Activated CD4-positive, alpha-beta memory T cell treated with anti-CD3 and anti-CD28 coated beads, Interleukin-2, amount 10 ng/mL, durations not matched to agents 7 days and 5 days (primary cell): ENCODE measurements at regions of chr2 and their contacts with region 1.

Region 1: GRCh38 chr2:189762551-189763298 is at the start of gene OSGEPL1:
- DNase-seq: peak; percentile 93
- H3K4me3 Mint-ChIP-seq: peak within 1 kb of the TSS; percentile 90
- H3K27ac Mint-ChIP-seq: peak within 1 kb of the TSS; percentile 97
- H3K4me1 Mint-ChIP-seq: peaks cover 17% of the 10 kb centered on the region
- H3K27me3 Mint-ChIP-seq: no peaks in the 10 kb centered on the region
- total RNA-seq, gene OSGEPL1: 8.0 TPM

Region 2: GRCh38 chr2:189661148-189661956 is 101.4 kb before region 1 on chr2 and contains the start of gene ASNSD1:
- CTCF ChIA-PET with region 1: interaction called, 34 read pairs
- POLR2A ChIA-PET with region 1: interaction called, 18 read pairs
- DNase-seq: peak; percentile 99
- H3K4me3 Mint-ChIP-seq: no peak within 1 kb of the TSS
- H3K27ac Mint-ChIP-seq: no peak within 1 kb of the TSS
- H3K4me1 Mint-ChIP-seq: peaks cover 52% of the 10 kb centered on the region
- H3K27me3 Mint-ChIP-seq: no peaks in the 10 kb centered on the region
- total RNA-seq, gene ASNSD1: 37.9 to 38.4 TPM

Region 3: GRCh38 chr2:189674374-189675112 is 88.2 kb before region 1 on chr2 and contains the start of gene ANKAR:
- CTCF ChIA-PET with region 1: interaction called, 11 read pairs
- POLR2A ChIA-PET with region 1: interaction called, 16 read pairs
- DNase-seq: peak; percentile 78
- H3K4me3 Mint-ChIP-seq: peak within 1 kb of the TSS; percentile 90
- H3K27ac Mint-ChIP-seq: peak within 1 kb of the TSS; percentile 90
- H3K4me1 Mint-ChIP-seq: peaks cover 33% of the 10 kb centered on the region
- H3K27me3 Mint-ChIP-seq: no peaks in the 10 kb centered on the region
- total RNA-seq, gene ANKAR: 3.9 to 7.0 TPM

Region 4: DNA sequence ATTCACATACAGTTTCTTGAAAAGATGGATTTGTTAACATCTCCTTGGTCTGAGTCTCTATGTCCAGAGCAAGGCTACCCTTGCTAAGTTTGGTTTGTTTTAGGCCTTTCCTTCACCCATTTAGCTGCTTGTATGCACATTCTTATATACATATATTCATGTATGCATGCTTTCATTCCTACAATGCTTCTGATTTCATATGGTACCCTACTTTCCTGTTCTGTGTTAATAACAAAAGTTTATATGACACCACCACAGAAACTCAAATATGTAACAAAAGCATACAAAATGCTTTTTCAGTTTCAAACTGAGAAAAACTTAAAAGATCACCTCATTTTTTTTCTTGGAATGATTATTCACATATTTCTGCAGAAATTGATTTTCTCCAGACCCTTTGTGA is 39.5 kb before region 1 on chr2:
- CTCF ChIA-PET with region 1: no interaction called
- POLR2A ChIA-PET with region 1: no interaction called
- DNase-seq: no peak
- H3K4me3 Mint-ChIP-seq: no peak overlapping the region
- H3K27ac Mint-ChIP-seq: no peak overlapping the region
- H3K4me1 Mint-ChIP-seq: peaks cover 9% of the 10 kb centered on the region
- H3K27me3 Mint-ChIP-seq: no peaks in the 10 kb centered on the region

Region 5: DNA sequence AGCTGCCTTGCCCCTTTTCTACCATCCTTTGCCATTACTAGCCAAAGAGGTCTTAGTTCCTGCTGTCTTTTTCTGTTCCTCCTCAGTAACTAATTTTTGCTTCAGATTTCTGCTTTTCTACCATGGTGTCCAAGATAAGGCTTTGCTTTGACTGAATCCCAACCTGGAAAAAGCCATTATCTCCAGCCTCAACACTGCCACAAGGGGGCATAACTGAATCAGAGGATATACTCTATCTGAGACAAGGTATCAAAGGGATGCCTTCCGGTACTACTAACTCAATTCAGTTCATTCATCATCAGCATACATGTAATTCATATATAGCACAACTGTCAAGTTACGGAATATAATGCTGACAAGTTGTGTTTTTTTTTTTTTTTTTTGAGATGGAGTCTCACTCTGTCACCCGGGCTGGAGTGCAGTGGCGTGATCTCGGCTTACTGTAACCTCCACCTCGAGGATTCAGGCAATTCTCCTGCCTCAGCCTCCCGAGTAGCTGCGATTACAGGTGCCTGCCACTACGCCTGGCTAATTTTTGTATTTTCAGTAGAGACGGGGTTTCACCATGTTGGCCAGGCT is 11.6 kb before region 1 on chr2:
- CTCF ChIA-PET with region 1: interaction called, 45 read pairs
- POLR2A ChIA-PET with region 1: interaction called, 10 read pairs
- DNase-seq: peak; percentile 42
- H3K4me3 Mint-ChIP-seq: no peak overlapping the region
- H3K27ac Mint-ChIP-seq: no peak overlapping the region
- H3K4me1 Mint-ChIP-seq: no peaks in the 10 kb centered on the region
- H3K27me3 Mint-ChIP-seq: no peaks in the 10 kb centered on the region

Region 6: GRCh38 chr2:189783927-189784867 is 21.5 kb after region 1 on chr2 and contains the starts of genes ORMDL1 and PMS1:
- CTCF ChIA-PET with region 1: interaction called, 25 read pairs
- POLR2A ChIA-PET with region 1: interaction called, 104 read pairs
- DNase-seq: peak; percentile 95
- H3K4me3 Mint-ChIP-seq: peak within 1 kb of the TSS; percentile 93
- H3K27ac Mint-ChIP-seq: peak within 1 kb of the TSS; percentile 93
- H3K4me1 Mint-ChIP-seq: peaks cover 59% of the 10 kb centered on the region
- H3K27me3 Mint-ChIP-seq: no peaks in the 10 kb centered on the region
- total RNA-seq, gene ORMDL1: 87.4 to 89.4 TPM
- total RNA-seq, gene PMS1: 24.6 to 26.4 TPM

Region 7: DNA sequence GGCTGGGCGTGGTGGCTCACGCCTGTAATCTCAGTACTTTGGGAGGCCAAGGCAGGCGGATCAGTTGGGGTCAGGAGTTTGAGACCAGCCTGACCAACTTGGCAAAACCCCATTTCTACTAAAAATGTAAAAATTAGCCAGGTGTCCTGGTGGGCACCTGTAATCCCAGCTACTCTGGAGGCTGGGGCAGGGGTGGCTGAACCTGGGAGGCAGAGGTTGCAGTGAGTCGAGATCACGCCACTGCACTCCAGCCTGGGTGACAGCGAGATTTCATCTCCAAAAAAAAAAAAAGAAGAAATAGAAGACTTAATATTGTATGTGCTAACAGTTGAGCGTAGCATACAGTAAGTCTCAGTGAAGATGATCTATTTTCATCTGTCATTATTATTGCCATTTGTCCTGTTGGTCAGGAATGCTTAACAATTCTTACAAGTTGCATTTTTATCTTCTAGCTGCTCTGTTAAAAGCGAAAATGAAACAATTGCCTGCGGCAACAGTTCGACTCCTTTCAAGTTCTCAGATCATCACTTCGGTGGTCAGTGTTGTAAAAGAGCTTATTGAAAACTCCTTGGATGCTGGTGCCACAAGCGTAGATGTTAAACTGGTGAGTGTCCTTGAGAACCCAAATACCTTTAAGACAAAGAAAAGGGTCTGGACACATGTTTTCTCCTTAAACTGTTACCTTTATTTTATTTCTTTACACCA is 28.8 kb after region 1 on chr2:
- CTCF ChIA-PET with region 1: interaction called, 27 read pairs
- POLR2A ChIA-PET with region 1: interaction called, 104 read pairs
- DNase-seq: peak; percentile 37
- H3K4me3 Mint-ChIP-seq: peak overlapping the region; percentile 68
- H3K27ac Mint-ChIP-seq: peak overlapping the region; percentile 65
- H3K4me1 Mint-ChIP-seq: peaks cover 31% of the 10 kb centered on the region
- H3K27me3 Mint-ChIP-seq: no peaks in the 10 kb centered on the region

Region 8: DNA sequence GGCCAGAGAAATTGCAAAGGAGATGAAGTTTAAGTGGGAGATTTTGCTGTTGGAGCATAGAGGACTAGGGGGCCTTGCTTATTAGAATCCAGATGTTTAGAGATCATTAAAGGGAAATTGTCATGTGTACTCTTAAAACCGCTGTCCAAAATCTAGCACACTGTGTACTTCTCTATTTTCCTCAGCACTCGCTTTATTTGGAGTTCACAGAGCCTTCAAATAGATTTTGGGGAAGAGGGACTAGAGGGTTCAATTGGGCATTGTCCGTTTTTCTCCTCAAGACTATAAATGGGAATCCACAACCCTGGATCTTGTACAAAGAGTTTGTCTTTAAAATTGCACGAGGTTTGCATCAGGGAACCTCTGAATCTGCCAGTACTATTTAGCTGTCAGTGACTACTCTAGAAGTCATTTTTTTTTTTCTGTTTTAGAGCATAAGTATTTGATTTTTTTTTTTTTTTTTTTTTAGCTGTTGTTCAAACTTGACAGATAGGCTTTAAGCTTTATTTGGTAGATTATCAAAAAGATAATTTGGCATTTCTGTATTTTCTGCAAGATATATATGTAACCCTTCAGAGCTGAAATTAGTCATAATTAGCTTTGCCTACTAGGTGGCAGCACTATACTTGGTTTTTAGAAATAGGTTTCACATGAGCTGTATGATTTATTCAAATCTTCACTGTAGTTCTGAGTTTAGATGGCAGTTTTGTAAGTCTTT is 35.7 kb after region 1 on chr2:
- CTCF ChIA-PET with region 1: interaction called, 27 read pairs
- POLR2A ChIA-PET with region 1: interaction called, 4 read pairs
- DNase-seq: no peak
- H3K4me3 Mint-ChIP-seq: no peak overlapping the region
- H3K27ac Mint-ChIP-seq: no peak overlapping the region
- H3K4me1 Mint-ChIP-seq: peaks cover 5% of the 10 kb centered on the region
- H3K27me3 Mint-ChIP-seq: no peaks in the 10 kb centered on the region